Left colon (tissue), 2 donors: ENCODE measurements at regions of chr11 and their contacts with region 1.

Region 1: DNA sequence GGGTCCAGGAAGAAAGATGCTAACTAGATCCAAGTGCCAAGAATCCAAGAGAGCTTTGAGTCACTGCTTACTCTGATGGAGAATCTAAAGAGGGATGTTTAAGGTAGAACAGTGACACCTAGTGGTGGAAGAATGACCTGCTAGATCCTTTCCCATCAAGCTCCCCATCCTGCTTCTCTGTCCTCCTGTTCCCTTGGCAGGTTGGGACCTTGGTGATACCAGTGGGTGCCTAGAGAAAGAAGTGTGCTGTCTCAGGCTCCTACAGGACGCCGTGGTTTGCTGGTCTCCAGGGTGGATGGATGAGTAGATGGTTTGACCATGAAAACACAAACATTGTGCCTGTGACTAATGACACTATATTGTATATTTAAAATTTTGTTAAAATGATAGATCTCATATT is 383.7 kb downstream of the TMEM135 start:
- DNase-seq: peak in 1 of 2 donors; percentile 12
- ATAC-seq: peak; percentile 85

Region 2: DNA sequence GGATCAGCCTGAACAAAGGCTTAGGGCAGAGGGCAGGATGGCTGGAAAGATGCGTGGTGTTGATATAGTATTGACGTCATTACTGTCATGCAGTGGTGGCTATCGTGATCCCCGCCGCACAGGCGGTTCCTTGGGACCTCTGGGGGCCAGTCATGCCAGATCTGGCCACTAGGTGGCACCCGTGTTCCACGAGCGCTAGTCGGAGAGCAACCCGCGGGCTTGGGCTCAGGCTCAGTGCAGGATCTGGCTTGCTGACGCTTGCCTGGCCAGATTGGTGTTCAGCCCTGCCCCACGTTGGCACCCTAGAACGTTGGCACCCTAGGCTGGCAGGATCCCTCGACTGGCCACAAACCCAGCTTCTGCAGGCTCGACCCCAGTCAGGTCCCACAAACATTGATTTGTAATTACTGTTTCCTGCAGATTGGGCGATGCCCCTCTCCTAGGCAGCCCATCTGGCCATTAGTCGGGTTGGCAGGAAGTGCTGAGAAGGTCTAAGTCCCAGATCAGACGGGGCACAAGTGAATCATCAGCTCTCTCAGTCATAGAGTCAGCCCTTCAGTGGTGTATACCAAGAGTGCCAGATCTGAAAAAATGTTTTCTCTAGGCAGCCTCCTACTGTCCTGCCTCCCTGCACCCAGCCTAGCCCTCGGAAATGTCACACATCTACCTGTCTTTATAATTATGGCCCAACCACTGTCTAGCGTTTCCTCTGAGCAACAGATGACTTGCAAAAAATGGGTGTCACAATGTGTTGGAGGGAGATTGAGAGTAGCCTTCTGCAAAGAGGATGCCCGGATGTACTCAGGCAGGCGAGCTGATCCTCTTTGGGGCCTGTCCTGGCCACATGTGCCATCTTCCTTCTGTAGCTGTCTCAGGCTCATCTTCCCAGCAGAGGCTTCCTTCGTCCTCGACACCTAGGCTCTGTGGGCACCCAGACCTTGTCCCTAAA is 68.4 kb before region 1 on chr11:
- intact Hi-C with region 1: loop called in 1 of 2 experiments (anchors 5 kb)
- DNase-seq: peak; percentile 66 to 89
- ATAC-seq: peak; percentile 79